Esophagus squamous epithelium (tissue), 5 donors: ENCODE measurements at regions of chr13 and their contacts with region 1.

Region 1: DNA sequence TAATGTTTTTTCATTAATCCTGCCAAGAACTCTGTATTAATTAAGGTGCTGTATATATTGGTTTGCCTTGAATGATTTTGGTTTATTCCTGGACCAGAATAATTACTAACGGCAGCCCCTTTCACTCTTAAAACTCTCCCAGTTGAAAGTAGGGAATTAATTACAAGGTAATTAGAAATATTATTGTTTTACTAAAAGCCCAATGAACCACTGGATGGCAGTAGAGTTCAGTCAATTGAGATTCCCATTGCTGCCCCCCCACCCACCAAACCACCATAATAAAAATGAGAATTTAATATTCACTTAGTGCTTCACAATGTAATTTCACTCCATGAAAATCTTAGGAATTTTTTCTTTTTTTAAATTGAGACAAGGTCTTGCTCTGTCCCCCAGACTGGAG is 13.7 kb downstream of the WBP4 start:
- DNase-seq: no peak
- H3K4me3 ChIP-seq: no peak overlapping the region
- H3K27ac ChIP-seq: no peak overlapping the region
- H3K4me1 ChIP-seq: no peaks in the 10 kb centered on the region
- H3K27me3 ChIP-seq: no peaks in the 10 kb centered on the region
- CTCF ChIP-seq: peak; percentile 37 to 64 (median 50)
- POLR2A ChIP-seq: no peak

Region 2: GRCh38 chr13:41222259-41222852 is 147.3 kb after region 1 on chr13:
- intact Hi-C with region 1: loop called (anchors 5 kb)
- DNase-seq: no peak
- H3K4me3 ChIP-seq: no peak overlapping the region
- H3K27ac ChIP-seq: no peak overlapping the region
- H3K4me1 ChIP-seq: peaks cover 0 to 5% (median 0%) of the 10 kb centered on the region in 3 donors
- H3K27me3 ChIP-seq: no peaks in the 10 kb centered on the region
- CTCF ChIP-seq: peak; percentile 54 to 84 (median 82)
- POLR2A ChIP-seq: no peak